ENCODE measurements at regions of chr9 and their contacts with region 1.

Region 1: DNA sequence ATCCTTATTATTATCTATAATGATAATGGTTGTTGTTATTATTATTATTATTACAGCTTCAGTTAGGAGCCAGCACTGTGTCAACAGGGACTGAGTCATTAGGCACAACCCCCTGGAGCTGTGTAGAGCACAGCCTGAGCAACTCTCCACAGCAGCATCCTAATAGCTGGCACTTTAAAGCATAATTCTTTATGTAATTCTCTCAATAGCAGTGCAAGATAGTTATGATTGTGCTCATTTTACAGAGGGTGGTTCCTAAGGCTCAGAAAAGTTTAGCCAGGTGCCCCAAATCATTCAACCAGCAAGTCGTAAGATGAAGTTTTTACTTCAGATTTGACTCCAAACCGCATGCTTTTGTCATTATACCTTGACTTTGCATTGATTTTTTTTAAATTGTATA is 390.3 kb downstream of the ANXA1 start:
- DNase-seq: no peak
- ATAC-seq: no peak
- H3K4me3 ChIP-seq: no peak overlapping the region
- H3K27ac ChIP-seq: no peak overlapping the region
- H3K4me1 ChIP-seq: no peaks in the 10 kb centered on the region
- H3K27me3 ChIP-seq: no peaks in the 10 kb centered on the region
- CTCF ChIP-seq: no peak
- POLR2A ChIP-seq: no peak
- RAD21 ChIP-seq: no peak

Region 2: DNA sequence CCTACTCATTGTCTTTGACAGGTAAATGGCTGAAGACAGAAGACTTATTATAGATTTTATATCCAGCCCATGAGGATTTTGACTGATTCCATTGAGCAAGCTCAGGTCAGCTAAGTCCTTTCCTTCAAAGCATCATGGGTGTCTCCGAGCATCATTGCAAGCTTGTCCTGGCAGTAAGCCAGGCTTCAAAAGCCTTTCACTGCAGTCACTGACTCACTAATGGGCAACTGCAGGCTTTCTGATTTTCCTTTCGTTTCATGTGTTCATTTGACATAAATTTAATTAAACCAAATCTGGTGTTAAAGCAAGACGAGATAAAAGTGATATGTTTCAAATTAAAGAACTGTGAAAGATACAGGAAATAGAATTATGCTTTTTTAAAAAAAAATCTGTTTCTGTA is 35.9 kb after region 1 on chr9:
- CTCF ChIA-PET with region 1: no interaction called
- POLR2A ChIA-PET with region 1: no interaction called
- dilution Hi-C with region 1: loop called (anchors 5 kb)
- in situ Hi-C with region 1: no loop called
- intact Hi-C with region 1: no loop called
- DNase-seq: no peak
- ATAC-seq: no peak
- H3K4me3 ChIP-seq: no peak overlapping the region
- H3K27ac ChIP-seq: no peak overlapping the region
- H3K4me1 ChIP-seq: no peaks in the 10 kb centered on the region
- H3K27me3 ChIP-seq: no peaks in the 10 kb centered on the region
- CTCF ChIP-seq: no peak
- POLR2A ChIP-seq: no peak
- RAD21 ChIP-seq: no peak

Region 3: DNA sequence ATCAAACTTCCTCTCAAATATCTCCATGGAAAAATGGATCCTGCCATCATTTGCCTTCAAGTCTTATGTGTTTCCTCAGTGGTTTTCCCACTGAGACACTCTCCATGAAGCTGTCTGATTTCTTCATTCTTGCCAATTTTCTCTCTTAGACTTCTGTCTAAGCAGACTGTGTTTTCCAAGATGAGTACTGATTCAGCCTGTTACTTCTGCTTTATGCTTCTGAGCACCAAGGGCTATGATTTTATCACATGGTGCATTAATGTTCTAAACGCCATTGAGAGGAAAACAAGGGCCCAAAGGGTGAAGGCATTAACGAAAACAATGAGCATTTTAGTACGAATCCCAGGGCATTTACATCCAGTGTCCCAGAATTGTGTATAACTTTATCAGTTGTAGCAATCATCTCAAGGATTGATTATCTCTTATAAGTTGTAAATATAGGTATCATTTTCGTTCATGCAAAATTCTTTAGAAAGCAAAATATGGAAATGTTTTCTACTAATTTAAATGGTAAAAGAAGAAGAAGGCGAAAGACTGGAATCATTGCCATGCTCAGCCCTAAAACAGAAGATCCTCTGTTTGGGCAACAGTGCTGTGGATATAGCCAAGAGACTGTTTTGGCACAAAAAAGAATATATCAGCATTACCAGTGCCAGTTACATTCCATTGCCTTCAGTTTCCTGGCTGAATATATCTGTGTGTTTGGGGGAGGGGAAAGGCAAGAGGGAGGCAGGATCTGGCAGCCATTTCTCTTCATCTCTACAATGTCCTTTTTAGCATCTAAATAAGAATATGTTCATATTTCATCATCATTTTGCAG is 147.3 kb after region 1 on chr9:
- CTCF ChIA-PET with region 1: no interaction called
- POLR2A ChIA-PET with region 1: no interaction called
- dilution Hi-C with region 1: no loop called
- in situ Hi-C with region 1: no loop called
- intact Hi-C with region 1: no loop called
- DNase-seq: no peak
- ATAC-seq: no peak
- H3K4me3 ChIP-seq: no peak overlapping the region
- H3K27ac ChIP-seq: no peak overlapping the region
- H3K4me1 ChIP-seq: no peaks in the 10 kb centered on the region
- H3K27me3 ChIP-seq: no peaks in the 10 kb centered on the region
- CTCF ChIP-seq: no peak
- POLR2A ChIP-seq: no peak
- RAD21 ChIP-seq: no peak

Measured in IMR-90 (cell line).